Sciatic nerve (tissue), 2 donors: ENCODE measurements at regions of chr1 and their contacts with region 1.

Region 1: GRCh38 chr1:208047476-208047934 is 136.6 kb upstream of the CD34 start:
- DNase-seq: peak; percentile 80
- ATAC-seq: peak; percentile 95

Region 2: DNA sequence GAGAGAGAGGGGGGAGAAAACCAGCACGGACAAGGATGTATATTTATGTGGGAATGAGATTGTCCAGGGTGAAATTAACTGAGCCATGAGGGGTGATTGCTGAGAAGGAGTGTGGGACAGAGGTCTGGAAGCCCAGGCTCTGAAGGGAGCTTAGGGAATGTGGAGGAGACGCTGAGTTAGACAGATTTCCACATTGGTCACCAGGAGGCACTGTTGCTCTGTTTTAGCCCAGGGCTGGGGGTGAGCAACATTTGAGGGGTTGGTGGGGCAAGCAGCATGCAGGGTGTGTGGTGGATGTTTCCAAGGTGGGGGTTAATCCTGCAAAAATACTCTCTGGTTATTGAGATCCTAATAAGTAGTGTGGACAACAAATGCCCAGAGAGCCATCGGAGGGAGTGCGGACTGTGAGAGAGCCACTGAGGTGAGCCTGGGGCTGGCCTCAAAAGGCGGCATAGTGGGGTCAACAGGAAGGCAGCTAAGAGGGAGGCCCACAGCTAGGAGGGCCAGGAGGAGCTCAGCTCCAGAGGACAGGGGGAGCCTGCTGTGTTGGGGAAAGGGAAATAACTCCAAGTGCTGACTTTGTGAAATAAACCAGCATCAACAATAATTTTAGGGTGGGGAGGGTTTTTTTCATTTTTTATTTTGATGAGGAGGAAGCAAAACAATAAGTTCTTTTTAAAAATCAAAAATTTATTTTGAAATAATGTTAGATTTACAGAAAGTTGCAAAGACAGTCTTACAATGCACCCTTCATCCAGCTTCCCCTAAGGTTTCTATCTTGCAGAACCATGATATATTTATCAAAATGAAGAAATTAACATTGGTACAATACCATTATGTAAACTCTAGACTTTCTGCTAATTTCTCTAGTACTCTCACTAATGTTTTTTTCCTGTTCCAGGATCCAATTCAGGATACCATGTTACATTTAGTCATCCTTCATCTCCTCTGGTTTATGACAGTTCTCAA is 53.7 kb before region 1 on chr1:
- intact Hi-C with region 1: no loop called
- DNase-seq: no peak
- ATAC-seq: no peak

Region 3: GRCh38 chr1:208093754-208094719 is 46.5 kb after region 1 on chr1:
- intact Hi-C with region 1: loop called (anchors 10 kb)
- DNase-seq: peak; percentile 85
- ATAC-seq: peak; percentile 72

Region 4: GRCh38 chr1:208233546-208233945 is 186.0 kb after region 1 on chr1:
- intact Hi-C with region 1: loop called (anchors 5 kb)
- DNase-seq: no peak
- ATAC-seq: peak; percentile 41